Activated CD4-positive, alpha-beta memory T cell treated with anti-CD3 and anti-CD28 coated beads, Interleukin-2, amount 10 ng/mL, durations not matched to agents 7 days and 5 days (primary cell): ENCODE measurements at regions of chr3 and their contacts with region 1.

Region 1: GRCh38 chr3:183766745-183767606 is 58.4 kb downstream of the MAP6D1 start:
- DNase-seq: peak; percentile 79
- H3K4me3 Mint-ChIP-seq: no peak overlapping the region
- H3K27ac Mint-ChIP-seq: no peak overlapping the region
- H3K4me1 Mint-ChIP-seq: peaks cover 20% of the 10 kb centered on the region
- H3K27me3 Mint-ChIP-seq: no peaks in the 10 kb centered on the region

Region 2: GRCh38 chr3:183468424-183468823 is 298.6 kb before region 1 on chr3:
- CTCF ChIA-PET with region 1: interaction called, 43 read pairs
- POLR2A ChIA-PET with region 1: no interaction called
- DNase-seq: no peak
- H3K4me3 Mint-ChIP-seq: no peak overlapping the region
- H3K27ac Mint-ChIP-seq: peak overlapping the region; percentile 59
- H3K4me1 Mint-ChIP-seq: peaks cover 23% of the 10 kb centered on the region
- H3K27me3 Mint-ChIP-seq: no peaks in the 10 kb centered on the region

Region 3: GRCh38 chr3:183481582-183481981 is 285.4 kb before region 1 on chr3:
- CTCF ChIA-PET with region 1: interaction called, 21 read pairs
- POLR2A ChIA-PET with region 1: no interaction called
- DNase-seq: no peak
- H3K4me3 Mint-ChIP-seq: no peak overlapping the region
- H3K27ac Mint-ChIP-seq: no peak overlapping the region
- H3K4me1 Mint-ChIP-seq: peaks cover 8% of the 10 kb centered on the region
- H3K27me3 Mint-ChIP-seq: no peaks in the 10 kb centered on the region

Region 4: GRCh38 chr3:183779896-183780465 is 13.0 kb after region 1 on chr3:
- CTCF ChIA-PET with region 1: interaction called, 15 read pairs
- POLR2A ChIA-PET with region 1: interaction called, 3 read pairs
- DNase-seq: no peak
- H3K4me3 Mint-ChIP-seq: no peak overlapping the region
- H3K27ac Mint-ChIP-seq: no peak overlapping the region
- H3K4me1 Mint-ChIP-seq: peaks cover 3% of the 10 kb centered on the region
- H3K27me3 Mint-ChIP-seq: no peaks in the 10 kb centered on the region